Tibial artery (tissue), 4 donors: ENCODE measurements at regions of chr20 and their contacts with region 1.

Region 1: DNA sequence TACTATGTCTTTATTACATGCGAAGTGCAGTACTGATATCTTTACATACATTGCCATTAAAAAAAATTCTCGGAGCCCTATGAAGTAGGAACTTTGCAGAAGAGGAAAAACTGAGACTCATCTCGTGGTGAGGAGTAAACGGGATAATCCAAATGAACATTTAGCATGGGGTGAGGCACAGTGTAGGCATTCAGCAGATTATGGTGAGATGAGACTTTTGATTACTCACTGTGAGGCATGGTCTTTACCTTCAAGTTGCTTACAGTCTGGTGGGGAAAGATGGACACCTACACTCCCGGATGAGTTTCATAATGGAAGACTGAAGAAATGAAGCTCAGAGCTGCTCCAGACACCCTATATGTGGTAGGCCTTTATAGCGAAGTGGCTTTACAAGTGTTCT is 1.4 kb downstream of the RPRD1B start:
- DNase-seq: no peak
- H3K4me3 ChIP-seq: peak overlapping the region; percentile 90 to 95
- H3K27ac ChIP-seq: no peak overlapping the region
- H3K4me1 ChIP-seq: peaks cover 0 to 58% (median 34%) of the 10 kb centered on the region in 4 donors
- H3K27me3 ChIP-seq: no peaks in the 10 kb centered on the region
- CTCF ChIP-seq: no peak

Region 2: GRCh38 chr20:37911838-37912281 is 123.1 kb before region 1 on chr20:
- intact Hi-C with region 1: no loop called
- DNase-seq: no peak
- H3K4me3 ChIP-seq: no peak overlapping the region
- H3K27ac ChIP-seq: no peak overlapping the region
- H3K4me1 ChIP-seq: peaks cover 0 to 30% (median 10%) of the 10 kb centered on the region in 4 donors
- H3K27me3 ChIP-seq: peaks cover 0 to 97% of the 10 kb centered on the region in 2 donors
- CTCF ChIP-seq: no peak

Region 3: GRCh38 chr20:38152621-38153231 is 117.8 kb after region 1 on chr20:
- intact Hi-C with region 1: no loop called
- DNase-seq: peak; percentile 93 to 98
- H3K4me3 ChIP-seq: no peak overlapping the region
- H3K27ac ChIP-seq: peak overlapping the region; percentile 84 to 89
- H3K4me1 ChIP-seq: peaks cover 7 to 75% (median 56%) of the 10 kb centered on the region in 4 donors
- H3K27me3 ChIP-seq: no peaks in the 10 kb centered on the region
- CTCF ChIP-seq: no peak

Region 4: DNA sequence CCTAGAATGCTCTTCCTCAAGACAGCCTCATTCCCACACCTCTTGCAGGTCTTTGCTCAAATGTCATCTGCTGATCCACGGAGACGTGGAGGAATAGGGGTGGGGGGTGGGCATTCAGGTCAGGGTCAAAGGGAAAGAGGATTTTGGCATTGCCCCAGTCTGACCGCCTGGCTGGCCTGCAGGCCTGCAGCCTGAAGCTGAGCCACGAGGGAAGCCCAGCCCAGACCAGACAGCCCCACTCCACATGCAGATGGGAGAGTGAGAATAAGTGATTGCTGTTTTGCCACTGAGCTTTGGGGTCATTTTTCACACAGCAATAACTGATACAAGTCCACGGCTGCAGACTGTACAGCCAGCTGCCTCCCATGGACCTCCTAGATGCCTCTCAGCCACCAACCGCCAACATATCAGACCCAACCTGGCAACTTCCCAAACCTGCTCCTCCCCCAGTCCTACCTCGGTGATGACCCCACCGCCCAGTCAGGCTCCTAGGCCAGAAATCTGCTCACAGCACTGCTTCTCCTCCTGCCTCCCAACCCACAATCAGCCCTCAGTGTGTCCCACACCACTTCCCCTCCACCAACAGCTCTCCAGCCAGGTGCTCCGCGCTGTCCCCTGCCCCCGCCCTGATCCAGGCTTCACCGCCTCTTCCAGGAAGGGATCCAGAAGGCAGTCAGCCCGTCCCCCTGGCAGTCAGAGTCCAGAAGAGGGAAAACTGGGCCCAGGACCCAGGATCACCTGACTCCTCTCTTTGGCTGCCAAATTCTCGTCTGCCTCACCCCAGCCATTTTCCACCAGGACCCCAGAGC is 211.6 kb after region 1 on chr20:
- intact Hi-C with region 1: no loop called
- DNase-seq: no peak
- H3K4me3 ChIP-seq: no peak overlapping the region
- H3K27ac ChIP-seq: no peak overlapping the region
- H3K4me1 ChIP-seq: peaks cover 0 to 14% (median 5%) of the 10 kb centered on the region in 4 donors
- H3K27me3 ChIP-seq: no peaks in the 10 kb centered on the region
- CTCF ChIP-seq: no peak

Region 5: DNA sequence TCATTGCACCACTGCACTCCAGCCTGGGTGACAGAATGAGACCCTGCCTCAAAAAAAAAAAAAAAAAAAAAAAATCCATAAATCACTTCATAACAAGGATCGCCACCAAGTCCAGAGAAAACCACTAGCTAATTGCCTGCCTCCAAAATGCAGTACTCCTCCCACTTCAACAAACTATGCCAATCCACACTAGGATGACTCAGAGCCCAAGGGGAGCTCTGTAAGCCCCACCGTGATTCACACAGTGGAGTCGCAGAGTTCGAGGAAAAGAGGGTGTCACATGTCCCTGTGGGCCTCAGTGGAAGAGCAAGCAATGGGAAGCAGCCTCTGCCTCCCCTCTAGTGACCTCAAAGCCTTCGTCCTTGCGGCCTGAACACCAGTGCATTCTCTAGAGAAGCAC is 391.0 kb after region 1 on chr20:
- intact Hi-C with region 1: loop called (anchors 5 kb)
- DNase-seq: no peak
- H3K4me3 ChIP-seq: no peak overlapping the region
- H3K27ac ChIP-seq: no peak overlapping the region
- H3K4me1 ChIP-seq: peaks cover 0 to 4% (median 0%) of the 10 kb centered on the region in 4 donors
- H3K27me3 ChIP-seq: no peaks in the 10 kb centered on the region
- CTCF ChIP-seq: no peak